AG04449 (cell line): ENCODE measurements at regions of chr11 and their contacts with region 1.

Region 1: GRCh38 chr11:12182676-12183541 is 72.5 kb downstream of the MICAL2 start:
- DNase-seq: peak; percentile 83
- H3K4me3 ChIP-seq: no peak overlapping the region
- CTCF ChIP-seq: no peak

Region 2: GRCh38 chr11:12170984-12171383 is 11.9 kb before region 1 on chr11:
- CTCF ChIA-PET with region 1: interaction called, 16 read pairs
- POLR2A ChIA-PET with region 1: interaction called, 4 read pairs
- DNase-seq: no peak
- H3K4me3 ChIP-seq: no peak overlapping the region
- CTCF ChIP-seq: no peak

Region 3: GRCh38 chr11:12200279-12201010 is 17.5 kb after region 1 on chr11:
- CTCF ChIA-PET with region 1: interaction called, 29 read pairs
- POLR2A ChIA-PET with region 1: interaction called, 52 read pairs
- DNase-seq: peak; percentile 95
- H3K4me3 ChIP-seq: no peak overlapping the region
- CTCF ChIP-seq: no peak

Region 4: DNA sequence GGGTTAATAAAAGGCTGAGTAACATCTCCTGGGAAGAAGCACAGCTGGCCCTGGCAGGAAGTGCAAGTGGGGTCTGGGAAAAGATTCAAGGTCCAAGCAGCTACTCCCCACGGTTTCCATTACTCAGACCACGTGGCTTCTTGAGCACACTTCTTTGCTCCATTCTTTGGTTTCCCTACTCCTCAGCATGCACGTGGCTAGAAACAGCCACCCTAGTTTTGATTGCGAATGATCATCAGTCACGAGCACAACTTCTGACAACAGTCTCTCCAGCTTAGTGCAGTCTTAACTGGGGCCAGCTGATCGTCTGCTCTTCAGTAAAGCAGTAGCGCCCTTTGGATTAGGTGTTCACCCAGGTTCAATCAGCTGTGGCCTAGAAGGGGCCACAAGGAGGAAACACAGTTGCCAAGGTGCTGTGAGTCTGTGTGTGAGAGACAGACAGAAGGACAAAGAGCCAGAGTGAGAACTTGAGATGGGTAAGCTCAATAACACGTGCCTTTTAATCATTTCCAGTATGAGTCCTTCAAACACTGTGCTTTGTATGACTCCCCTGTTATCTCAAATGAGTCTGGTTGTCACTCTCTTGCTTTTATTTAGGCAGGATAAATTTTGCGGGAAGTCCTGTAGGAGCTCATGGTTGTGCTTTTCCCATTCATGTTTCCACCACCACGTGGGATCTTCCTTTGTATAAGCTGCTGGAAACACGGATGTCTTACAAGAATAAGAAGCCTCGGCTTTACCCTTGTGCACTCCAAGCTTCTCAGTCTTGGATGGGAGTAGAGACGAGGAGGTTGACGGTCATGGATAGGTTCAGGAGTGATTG is 193.6 kb after region 1 on chr11:
- CTCF ChIA-PET with region 1: no interaction called
- POLR2A ChIA-PET with region 1: no interaction called
- DNase-seq: peak; percentile 19
- H3K4me3 ChIP-seq: peak overlapping the region; percentile 79
- CTCF ChIP-seq: no peak